ENCODE measurements at regions of chr15 and their contacts with region 1.

Region 1: GRCh38 chr15:69031013-69032001 is 16.8 kb downstream of the NOX5 start:
- DNase-seq: peak; percentile 82
- ATAC-seq: peak; percentile 87 to 93
- H3K4me3 ChIP-seq: peak overlapping the region; percentile 47
- H3K27ac ChIP-seq: peak overlapping the region; percentile 57 to 78
- H3K4me1 ChIP-seq: peaks cover 23% of the 10 kb centered on the region
- CTCF ChIP-seq: peak; percentile 90
- EP300 ChIP-seq: no peak
- POLR2A ChIP-seq: 0 out of 2 replicates have a peak, but pooled peaks have one; percentile 6
- RAD21 ChIP-seq: peak; percentile 57 to 69

Region 2: GRCh38 chr15:69000725-69001503 is 30.4 kb before region 1 on chr15:
- CTCF ChIA-PET with region 1: interaction called, 10 read pairs
- POLR2A ChIA-PET with region 1: no interaction called
- DNase-seq: no peak
- ATAC-seq: no peak
- H3K4me3 ChIP-seq: no peak overlapping the region
- H3K27ac ChIP-seq: no peak overlapping the region
- H3K4me1 ChIP-seq: no peaks in the 10 kb centered on the region
- CTCF ChIP-seq: no peak
- EP300 ChIP-seq: no peak
- POLR2A ChIP-seq: no peak
- RAD21 ChIP-seq: no peak

Region 3: DNA sequence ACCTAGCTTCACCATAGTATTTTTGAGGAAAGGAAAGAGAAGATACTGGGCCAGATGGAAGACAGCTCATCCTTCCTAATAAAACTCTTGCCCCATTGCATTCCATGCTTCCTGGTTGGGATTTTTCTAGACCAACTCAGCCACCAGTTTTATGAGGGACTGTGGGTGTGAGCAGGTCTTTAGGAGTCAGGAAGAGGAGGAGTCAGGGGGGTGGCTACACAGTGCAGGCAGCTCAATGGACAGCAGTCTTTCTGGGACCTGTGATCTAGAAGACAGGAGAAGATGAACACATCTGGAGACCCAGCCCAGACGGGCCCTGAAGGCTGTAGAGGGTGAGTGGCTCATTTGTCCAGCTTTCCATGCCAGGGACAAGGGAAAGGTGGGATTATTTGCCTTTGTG is 16.9 kb before region 1 on chr15 and contains the start of gene NOX5:
- CTCF ChIA-PET with region 1: interaction called, 125 read pairs
- POLR2A ChIA-PET with region 1: interaction called, 8 read pairs
- DNase-seq: peak in 1 of 2 experiments; percentile 46
- ATAC-seq: peak; percentile 38 to 77; a peak in 3 of 6 replicates
- H3K4me3 ChIP-seq: no peak within 1 kb of the TSS
- H3K27ac ChIP-seq: no peak within 1 kb of the TSS
- H3K4me1 ChIP-seq: peaks cover 7% of the 10 kb centered on the region; the same call in 2 of the 3 replicates
- CTCF ChIP-seq: no peak
- EP300 ChIP-seq: no peak
- POLR2A ChIP-seq: no peak
- RAD21 ChIP-seq: no peak
- polyA plus RNA-seq, gene NOX5: 0.13 and 0.22 TPM in 2 replicates

Region 4: GRCh38 chr15:69045808-69046207 is 14.5 kb after region 1 on chr15:
- CTCF ChIA-PET with region 1: interaction called, 94 read pairs
- POLR2A ChIA-PET with region 1: interaction called, 3 read pairs
- DNase-seq: peak in 1 of 2 experiments; percentile 58
- ATAC-seq: peak; percentile 67 to 89; a peak in 5 of 6 replicates
- H3K4me3 ChIP-seq: no peak overlapping the region
- H3K27ac ChIP-seq: peak overlapping the region in 1 of 2 experiments; percentile 65; a peak in 3 of 6 replicates
- H3K4me1 ChIP-seq: peaks cover 24% of the 10 kb centered on the region
- CTCF ChIP-seq: no peak
- EP300 ChIP-seq: no peak
- POLR2A ChIP-seq: no peak
- RAD21 ChIP-seq: no peak

Region 5: DNA sequence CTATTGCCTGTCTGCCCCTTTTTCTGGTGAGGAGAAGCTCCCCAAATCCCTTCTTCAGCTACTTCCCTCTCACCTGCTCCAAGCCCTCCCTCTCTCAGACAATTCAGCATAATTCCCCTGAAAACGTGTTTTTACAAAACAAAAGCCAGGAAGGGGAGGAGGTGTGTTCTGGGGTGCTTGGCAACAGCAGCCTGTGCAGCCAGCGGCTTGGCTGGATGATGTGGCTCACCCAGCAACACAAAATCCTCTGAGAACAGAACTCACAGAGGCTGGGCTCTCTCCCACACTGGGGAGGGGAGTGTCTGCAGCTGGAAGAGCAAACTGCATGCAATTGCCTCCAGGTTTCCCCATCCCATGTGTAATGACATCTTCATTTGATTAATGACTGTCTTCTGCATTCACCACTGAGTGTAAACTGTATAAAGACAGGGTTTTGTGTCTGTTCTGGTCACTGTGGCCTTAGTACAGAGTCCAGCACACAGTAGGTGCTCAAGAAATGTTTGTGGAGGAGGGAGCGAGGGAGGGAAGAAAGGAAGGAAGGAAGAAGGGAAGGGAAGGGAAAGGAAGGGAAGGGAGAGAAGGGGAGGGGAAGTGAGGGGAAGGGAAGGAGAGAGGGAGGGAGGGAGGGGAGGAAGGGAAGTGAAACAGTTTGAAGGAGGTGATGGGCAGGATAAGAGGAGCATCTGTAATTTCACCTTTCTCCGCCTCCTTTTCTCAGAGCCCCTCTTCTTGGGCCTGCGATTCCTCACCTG is 59.1 kb after region 1 on chr15:
- CTCF ChIA-PET with region 1: no interaction called
- POLR2A ChIA-PET with region 1: no interaction called
- DNase-seq: peak in 1 of 2 experiments; percentile 34
- ATAC-seq: no peak
- H3K4me3 ChIP-seq: no peak overlapping the region
- H3K27ac ChIP-seq: peak overlapping the region in 1 of 2 experiments; percentile 80; a peak in 3 of 6 replicates
- H3K4me1 ChIP-seq: peaks cover 51% of the 10 kb centered on the region
- CTCF ChIP-seq: no peak
- EP300 ChIP-seq: no peak
- POLR2A ChIP-seq: no peak
- RAD21 ChIP-seq: no peak

Measured in A549 (cell line).